CD4-positive, alpha-beta memory T cell (primary cell): ENCODE measurements at regions of chr13 and their contacts with region 1.

Region 1: DNA sequence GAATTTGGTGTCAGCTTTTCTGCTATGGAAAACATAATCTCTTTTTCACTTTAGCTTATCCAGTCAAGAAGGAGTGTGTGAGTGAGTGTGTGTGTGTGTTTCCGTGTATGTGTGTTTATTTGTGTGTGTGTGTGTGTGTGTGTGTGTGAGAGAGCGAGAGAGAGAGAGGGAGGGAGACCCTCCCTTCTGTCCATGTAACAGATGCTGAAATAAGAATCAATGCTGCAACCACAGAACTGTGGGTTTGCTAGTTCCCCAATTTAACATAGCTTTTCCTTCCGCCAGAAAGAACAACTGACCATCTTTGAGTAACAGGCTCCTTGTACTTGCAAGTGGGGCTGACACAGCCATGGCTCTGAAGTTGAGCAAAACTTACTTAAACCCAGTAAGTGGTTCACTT is 5.2 kb downstream of the LCP1 start:
- DNase-seq: peak in 2 of 5 donors; percentile 29 to 50
- H3K4me3 ChIP-seq: peak overlapping the region; percentile 14 to 94
- H3K4me3 Mint-ChIP-seq: peak overlapping the region; percentile 75 to 98 (median 87)
- H3K27ac ChIP-seq: peak overlapping the region; percentile 74
- H3K27ac Mint-ChIP-seq: peak overlapping the region; percentile 89 to 99 (median 90)
- H3K4me1 ChIP-seq: peaks cover 76% of the 10 kb centered on the region
- H3K4me1 Mint-ChIP-seq: peaks cover 50 to 85% (median 59%) of the 10 kb centered on the region in 4 donors
- H3K27me3 ChIP-seq: no peaks in the 10 kb centered on the region
- H3K27me3 Mint-ChIP-seq: no peaks in the 10 kb centered on the region

Region 2: DNA sequence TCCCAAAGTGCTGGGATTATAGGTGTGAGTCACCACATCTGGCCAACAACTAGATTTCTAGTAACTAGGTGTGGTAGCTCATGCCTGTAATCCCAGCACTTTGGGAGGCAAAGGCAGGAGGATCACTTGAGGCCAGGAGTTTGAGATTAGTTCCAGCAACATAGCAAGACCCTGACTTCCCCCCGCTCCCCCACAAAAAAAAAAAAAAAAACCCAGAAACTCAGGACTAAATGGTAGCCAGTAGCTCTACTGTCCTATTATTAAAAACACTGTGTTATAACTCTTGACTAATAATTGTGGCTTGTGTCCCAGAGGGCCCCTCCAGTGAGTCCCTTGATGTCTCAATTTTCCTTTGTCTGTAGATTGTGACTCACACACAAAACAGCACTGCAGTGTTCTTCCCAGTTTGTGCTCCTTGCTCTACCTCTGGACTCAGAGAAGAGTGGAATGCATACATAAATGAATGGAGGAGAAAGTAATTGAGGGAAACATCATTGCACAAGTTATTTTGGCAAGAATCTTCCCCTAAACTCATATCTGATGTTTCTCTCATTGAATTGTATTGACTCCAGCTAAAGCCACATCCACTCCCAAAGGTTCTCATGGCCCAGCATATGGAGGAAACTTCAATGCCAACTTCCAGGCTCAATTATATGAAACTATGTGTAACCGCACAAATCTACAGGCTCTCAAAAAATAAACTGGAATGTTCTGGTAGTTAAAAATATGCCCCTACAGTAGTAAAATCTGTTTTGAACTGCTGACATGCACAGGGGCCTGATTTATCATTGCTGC is 844.5 kb before region 1 on chr13:
- CTCF ChIA-PET with region 1: no interaction called
- POLR2A ChIA-PET with region 1: no interaction called
- intact Hi-C with region 1: loop called (anchors 10 kb)
- DNase-seq: no peak
- H3K4me3 ChIP-seq: no peak overlapping the region
- H3K4me3 Mint-ChIP-seq: peak overlapping the region in 3 of 8 donors; percentile 2 to 14 (median 12)
- H3K27ac ChIP-seq: no peak overlapping the region
- H3K27ac Mint-ChIP-seq: peak overlapping the region; percentile 38 to 87 (median 80)
- H3K4me1 ChIP-seq: peaks cover 98% of the 10 kb centered on the region
- H3K4me1 Mint-ChIP-seq: peaks cover 66 to 99% (median 84%) of the 10 kb centered on the region in 4 donors
- H3K27me3 ChIP-seq: no peaks in the 10 kb centered on the region
- H3K27me3 Mint-ChIP-seq: no peaks in the 10 kb centered on the region

Region 3: GRCh38 chr13:45994752-45995151 is 182.0 kb before region 1 on chr13:
- CTCF ChIA-PET with region 1: no interaction called
- POLR2A ChIA-PET with region 1: no interaction called
- intact Hi-C with region 1: no loop called
- DNase-seq: no peak
- H3K4me3 ChIP-seq: no peak overlapping the region
- H3K4me3 Mint-ChIP-seq: no peak overlapping the region
- H3K27ac ChIP-seq: no peak overlapping the region
- H3K27ac Mint-ChIP-seq: peak overlapping the region in 2 of 7 donors; percentile 13 to 48
- H3K4me1 ChIP-seq: no peaks in the 10 kb centered on the region
- H3K4me1 Mint-ChIP-seq: peaks cover 0 to 16% (median 7%) of the 10 kb centered on the region in 4 donors
- H3K27me3 ChIP-seq: no peaks in the 10 kb centered on the region
- H3K27me3 Mint-ChIP-seq: no peaks in the 10 kb centered on the region

Region 4: GRCh38 chr13:46160471-46161066 is 16.2 kb before region 1 on chr13:
- CTCF ChIA-PET with region 1: interaction called, 188 read pairs
- POLR2A ChIA-PET with region 1: interaction called, 288 read pairs
- intact Hi-C with region 1: no loop called
- DNase-seq: peak; percentile 54 to 77 (median 73)
- H3K4me3 ChIP-seq: peak overlapping the region; percentile 2 to 23
- H3K4me3 Mint-ChIP-seq: peak overlapping the region; percentile 12 to 87 (median 82)
- H3K27ac ChIP-seq: peak overlapping the region; percentile 73
- H3K27ac Mint-ChIP-seq: peak overlapping the region; percentile 84 to 96 (median 94)
- H3K4me1 ChIP-seq: peaks cover 54% of the 10 kb centered on the region
- H3K4me1 Mint-ChIP-seq: peaks cover 44 to 59% (median 51%) of the 10 kb centered on the region in 4 donors
- H3K27me3 ChIP-seq: no peaks in the 10 kb centered on the region
- H3K27me3 Mint-ChIP-seq: no peaks in the 10 kb centered on the region

Region 5: DNA sequence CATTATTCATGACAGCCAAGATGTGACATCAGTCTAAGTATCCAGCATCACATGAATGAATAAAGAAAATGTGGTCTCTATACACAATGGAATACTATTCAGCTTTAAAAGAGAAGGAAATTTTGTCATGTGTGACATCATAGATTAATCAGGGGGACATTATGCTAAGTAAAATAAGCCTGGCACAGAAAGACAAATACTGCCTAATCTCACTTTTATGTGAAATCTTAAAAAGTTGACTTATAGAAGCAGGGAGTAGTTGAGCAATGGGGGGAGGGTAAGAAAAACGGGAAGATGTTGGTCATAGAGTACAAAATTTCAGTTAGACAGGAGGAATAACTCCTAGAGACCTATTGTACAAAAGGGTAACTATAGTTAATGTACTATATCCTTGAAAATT is 15.6 kb after region 1 on chr13:
- CTCF ChIA-PET with region 1: interaction called, 42 read pairs
- POLR2A ChIA-PET with region 1: interaction called, 10 read pairs
- intact Hi-C with region 1: no loop called
- DNase-seq: no peak
- H3K4me3 ChIP-seq: no peak overlapping the region
- H3K4me3 Mint-ChIP-seq: no peak overlapping the region
- H3K27ac ChIP-seq: no peak overlapping the region
- H3K27ac Mint-ChIP-seq: no peak overlapping the region
- H3K4me1 ChIP-seq: no peaks in the 10 kb centered on the region
- H3K4me1 Mint-ChIP-seq: peaks cover 0 to 3% (median under 1%) of the 10 kb centered on the region in 4 donors
- H3K27me3 ChIP-seq: no peaks in the 10 kb centered on the region
- H3K27me3 Mint-ChIP-seq: no peaks in the 10 kb centered on the region

Region 6: DNA sequence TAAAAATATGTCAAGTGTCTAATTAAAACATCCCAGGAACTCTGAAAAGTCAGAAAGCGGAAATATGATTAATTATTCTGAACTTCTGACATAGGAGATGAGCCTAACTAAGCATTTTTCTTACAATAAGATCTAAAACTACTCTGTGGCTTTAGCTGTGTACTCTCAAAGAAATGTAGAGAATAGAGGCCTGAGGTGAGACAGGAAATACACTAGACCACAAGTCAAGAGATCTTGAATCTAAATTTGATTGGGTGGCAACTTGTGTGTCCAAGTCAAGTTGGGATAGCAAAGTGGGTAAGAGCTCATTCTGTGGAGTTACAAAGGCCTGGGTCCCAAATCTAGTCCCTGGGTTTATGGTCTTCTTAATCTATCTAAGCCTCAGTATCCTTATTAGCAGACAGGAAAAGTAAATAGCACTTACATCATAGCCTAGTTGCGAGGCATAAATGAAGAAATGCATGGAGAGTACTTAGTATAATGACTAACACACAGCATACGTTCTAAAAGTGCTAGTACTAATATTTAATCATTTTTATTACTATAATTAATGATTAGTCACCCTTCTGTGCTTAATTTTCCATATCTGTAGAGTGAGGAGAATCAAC is 25.5 kb after region 1 on chr13:
- CTCF ChIA-PET with region 1: interaction called, 5 read pairs
- POLR2A ChIA-PET with region 1: interaction called, 16 read pairs
- intact Hi-C with region 1: no loop called
- DNase-seq: peak in 3 of 5 donors; percentile 35 to 50 (median 40)
- H3K4me3 ChIP-seq: no peak overlapping the region
- H3K4me3 Mint-ChIP-seq: peak overlapping the region in 6 of 8 donors; percentile 37 to 76 (median 58)
- H3K27ac ChIP-seq: no peak overlapping the region
- H3K27ac Mint-ChIP-seq: peak overlapping the region; percentile 73 to 93 (median 90)
- H3K4me1 ChIP-seq: peaks cover 32% of the 10 kb centered on the region
- H3K4me1 Mint-ChIP-seq: peaks cover 31 to 60% (median 41%) of the 10 kb centered on the region in 4 donors
- H3K27me3 ChIP-seq: no peaks in the 10 kb centered on the region
- H3K27me3 Mint-ChIP-seq: no peaks in the 10 kb centered on the region

Region 7: DNA sequence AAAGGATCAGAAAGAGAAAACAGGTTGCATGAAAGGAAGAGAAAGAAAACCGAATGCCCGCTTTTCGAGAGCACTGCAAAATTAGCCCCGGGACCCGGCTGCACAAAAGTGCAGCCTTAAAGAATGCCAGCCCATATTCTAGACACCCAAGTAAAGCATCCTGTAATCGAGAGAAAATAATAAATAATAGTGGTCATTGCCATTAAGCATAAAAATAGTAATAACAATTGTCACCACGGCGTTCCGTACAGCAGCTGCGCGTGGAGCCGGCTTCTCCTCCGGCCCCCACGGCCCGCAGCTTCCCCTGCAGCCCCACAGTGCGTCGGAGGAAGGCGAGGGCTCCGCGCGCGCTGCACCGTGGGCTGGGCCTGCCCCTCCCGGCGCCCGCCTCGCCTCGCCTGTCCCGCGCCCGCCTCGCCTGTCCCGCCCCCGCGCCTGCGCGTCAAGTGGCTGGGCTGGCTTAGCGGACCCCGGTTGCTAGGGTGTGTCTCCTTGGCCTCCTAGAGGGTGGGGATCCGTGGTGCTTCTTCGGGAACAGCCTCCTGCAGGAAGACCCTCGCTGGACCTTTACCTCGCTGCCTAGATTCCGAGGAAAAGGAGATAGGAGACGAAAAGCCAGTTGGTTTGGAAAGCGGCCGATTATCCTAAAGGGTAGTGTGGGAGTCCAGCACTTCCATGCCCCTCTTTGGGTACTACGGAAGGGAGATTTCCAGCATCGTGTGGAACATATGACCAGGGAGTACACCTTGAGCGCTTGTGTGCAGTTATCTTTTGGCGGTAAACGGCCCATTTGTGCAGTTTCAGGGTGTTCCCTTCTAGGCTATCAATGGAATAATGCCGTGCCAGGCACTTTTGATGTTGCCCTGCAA is 35.0 kb after region 1 on chr13 and contains the start of gene LRRC63:
- CTCF ChIA-PET with region 1: interaction called, 10 read pairs
- POLR2A ChIA-PET with region 1: interaction called, 29 read pairs
- intact Hi-C with region 1: no loop called
- DNase-seq: peak; percentile 80 to 85 (median 84)
- H3K4me3 ChIP-seq: peak within 1 kb of the TSS; percentile 49 to 56
- H3K4me3 Mint-ChIP-seq: peak within 1 kb of the TSS; percentile 85 to 97 (median 94)
- H3K27ac ChIP-seq: peak within 1 kb of the TSS; percentile 75
- H3K27ac Mint-ChIP-seq: peak within 1 kb of the TSS; percentile 83 to 97 (median 96)
- H3K4me1 ChIP-seq: peaks cover 18% of the 10 kb centered on the region
- H3K4me1 Mint-ChIP-seq: peaks cover 9 to 30% (median 18%) of the 10 kb centered on the region in 4 donors
- H3K27me3 ChIP-seq: no peaks in the 10 kb centered on the region
- H3K27me3 Mint-ChIP-seq: no peaks in the 10 kb centered on the region
- total RNA-seq, gene LRRC63: 0.49 to 0.75 TPM

Region 8: DNA sequence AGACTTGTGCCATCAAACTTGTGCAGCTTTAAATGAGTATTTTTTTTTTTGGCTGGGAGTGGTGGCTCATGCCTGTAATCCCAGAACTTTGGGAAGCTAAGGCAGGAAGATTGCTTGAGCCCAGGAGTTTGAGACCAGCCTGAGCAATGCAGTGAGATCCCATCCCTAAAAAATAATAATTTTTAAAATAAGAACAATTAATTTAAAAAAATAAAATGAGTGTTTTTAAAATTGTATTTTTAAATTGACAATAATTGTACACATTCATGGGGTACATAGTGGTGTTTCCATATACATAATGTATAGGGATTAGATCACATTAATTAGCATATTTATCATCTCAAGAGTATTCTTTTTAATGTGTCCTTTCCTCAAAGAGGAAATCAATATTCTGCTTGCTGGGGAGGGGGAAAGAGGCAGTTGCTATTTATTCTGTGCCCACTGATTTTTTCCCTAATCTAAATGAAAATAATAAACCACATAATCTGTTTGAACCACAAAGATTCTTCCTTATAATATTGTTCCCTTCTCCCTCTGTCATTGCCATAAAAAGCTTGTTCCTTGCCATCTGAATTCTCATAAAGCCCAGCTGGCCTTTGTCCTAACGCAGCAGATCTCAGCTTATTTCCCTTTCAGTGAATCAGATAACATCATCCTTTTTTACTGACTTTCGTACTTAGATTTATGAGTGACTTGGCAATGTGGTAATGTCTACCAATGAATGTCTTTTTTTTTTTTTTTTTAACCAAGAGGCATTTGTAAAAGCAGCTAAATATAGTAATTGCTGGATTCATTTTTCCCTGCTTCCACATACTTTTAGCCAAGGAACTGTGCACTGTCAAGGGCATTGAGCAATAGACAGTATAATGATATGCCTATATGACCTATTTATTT is 292.1 kb after region 1 on chr13:
- CTCF ChIA-PET with region 1: no interaction called
- POLR2A ChIA-PET with region 1: no interaction called
- intact Hi-C with region 1: no loop called
- DNase-seq: no peak
- H3K4me3 ChIP-seq: no peak overlapping the region
- H3K4me3 Mint-ChIP-seq: no peak overlapping the region
- H3K27ac ChIP-seq: no peak overlapping the region
- H3K27ac Mint-ChIP-seq: no peak overlapping the region
- H3K4me1 ChIP-seq: no peaks in the 10 kb centered on the region
- H3K4me1 Mint-ChIP-seq: no peaks in the 10 kb centered on the region
- H3K27me3 ChIP-seq: no peaks in the 10 kb centered on the region
- H3K27me3 Mint-ChIP-seq: no peaks in the 10 kb centered on the region